ENCODE measurements at regions of chr6 and their contacts with region 1.

Region 1: DNA sequence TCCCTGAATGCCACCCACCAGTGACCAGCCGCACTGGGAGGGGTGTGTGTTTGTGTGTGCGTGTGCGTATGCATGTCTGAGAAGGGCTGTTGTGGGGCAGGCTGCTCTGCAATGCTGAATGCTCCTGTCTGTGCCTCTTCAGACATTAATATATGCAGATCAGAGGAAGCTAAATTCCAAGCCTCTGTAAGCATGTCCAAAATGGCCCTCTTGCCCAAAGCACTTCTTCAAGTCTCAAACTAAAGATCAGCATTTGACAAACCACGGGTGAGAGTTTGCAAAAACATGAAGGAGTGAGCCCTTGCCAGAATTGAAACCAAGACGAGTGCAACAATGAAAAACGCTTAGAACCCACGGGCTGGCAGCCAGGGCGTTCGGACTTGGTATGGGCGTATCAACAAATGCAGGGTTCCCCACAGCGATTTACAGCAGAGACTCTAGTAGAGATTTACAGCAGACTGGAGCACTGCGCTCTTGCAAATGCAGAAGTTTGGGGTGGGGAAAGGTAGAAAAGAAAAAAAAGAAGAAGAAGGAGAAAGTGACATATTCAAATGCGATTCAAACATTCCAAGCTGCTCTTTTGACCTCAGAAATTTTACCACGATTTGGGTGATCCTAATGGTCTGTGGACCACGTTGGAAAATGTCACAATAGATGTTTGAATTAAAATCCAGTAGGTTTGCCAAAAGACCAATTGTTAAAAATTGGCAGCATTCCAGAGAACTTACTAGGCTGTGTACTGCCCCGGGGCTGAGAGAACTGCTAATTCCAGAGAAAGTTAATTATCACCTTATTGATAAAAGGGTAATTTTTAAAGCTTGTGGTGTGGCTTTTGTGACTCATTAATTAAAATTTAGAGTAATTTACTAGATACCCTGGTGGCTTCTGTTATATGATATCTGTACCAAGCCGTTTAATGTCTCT is 3.5 kb downstream of the SCML4 start:
- DNase-seq: no peak
- H3K4me3 ChIP-seq: peak overlapping the region; percentile 1 to 49 (median 30)
- H3K27ac ChIP-seq: no peak overlapping the region
- H3K4me1 ChIP-seq: no peaks in the 10 kb centered on the region
- H3K27me3 ChIP-seq: no peaks in the 10 kb centered on the region
- CTCF ChIP-seq: no peak
- POLR2A ChIP-seq: no peak

Region 2: DNA sequence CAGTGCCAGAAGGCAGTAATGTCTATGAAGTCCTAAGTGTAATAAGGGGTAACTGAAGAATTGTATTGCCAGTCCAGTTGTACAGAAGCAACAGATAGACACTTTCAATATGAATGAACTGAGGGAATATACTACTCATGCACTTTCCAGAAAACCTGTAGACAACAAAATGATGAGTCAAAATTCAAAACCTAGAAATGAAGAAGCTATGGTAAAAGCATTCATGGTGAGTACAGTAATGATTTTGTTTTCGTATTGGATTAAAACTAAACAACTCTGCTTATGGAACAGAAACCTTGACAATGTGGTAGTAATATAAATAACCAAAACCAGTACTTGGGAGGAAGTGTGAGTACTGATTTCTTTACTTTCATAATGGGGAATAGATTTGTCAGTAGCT is 1062.6 kb after region 1 on chr6:
- intact Hi-C with region 1: loop called (anchors 5 kb)
- DNase-seq: no peak
- H3K4me3 ChIP-seq: no peak overlapping the region
- H3K27ac ChIP-seq: no peak overlapping the region
- H3K4me1 ChIP-seq: no peaks in the 10 kb centered on the region
- H3K27me3 ChIP-seq: no peaks in the 10 kb centered on the region
- CTCF ChIP-seq: no peak
- POLR2A ChIP-seq: no peak